HepG2 (cell line): ENCODE measurements at regions of chr20 and their contacts with region 1.

Region 1: GRCh38 chr20:62321521-62321948 is 18.7 kb downstream of the ADRM1 start:
- DNase-seq: no peak
- ATAC-seq: peak; percentile 18
- H3K4me3 ChIP-seq: no peak overlapping the region
- H3K27ac ChIP-seq: no peak overlapping the region
- H3K4me1 ChIP-seq: no peaks in the 10 kb centered on the region
- H3K27me3 ChIP-seq: no peaks in the 10 kb centered on the region
- CTCF ChIP-seq: 0 out of 2 replicates have a peak, but pooled peaks have one; percentile 13
- EP300 ChIP-seq: no peak
- POLR2A ChIP-seq: 0 out of 4 replicates have a peak, but pooled peaks of 1 of the 2 experiments have one; percentile 24
- RAD21 ChIP-seq: no peak

Region 2: DNA sequence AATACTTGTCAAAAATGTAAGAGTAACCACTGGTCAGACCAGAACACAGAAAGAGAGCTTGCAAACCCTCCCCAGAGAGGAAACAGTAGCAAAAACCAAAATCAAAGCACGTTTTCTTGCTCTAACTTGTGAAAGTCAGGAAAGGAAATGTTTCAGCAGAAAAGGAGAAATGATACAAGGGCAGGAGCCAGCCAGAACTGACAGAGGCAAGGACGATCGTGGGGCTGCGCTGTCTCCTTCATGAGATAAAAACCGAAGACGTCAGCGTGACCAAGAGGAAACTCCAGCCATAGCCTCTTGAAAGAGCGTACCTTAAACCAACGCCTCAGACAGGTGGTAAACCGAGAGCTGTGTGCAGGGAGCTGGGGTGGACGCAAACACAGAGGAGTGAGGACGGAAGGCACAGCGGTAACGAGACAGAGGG is 18.1 kb after region 1 on chr20:
- CTCF ChIA-PET with region 1: no interaction called
- POLR2A ChIA-PET with region 1: no interaction called
- in situ Hi-C with region 1: no loop called
- intact Hi-C with region 1: loop called (anchors 1 kb)
- DNase-seq: no peak
- ATAC-seq: no peak
- H3K4me3 ChIP-seq: no peak overlapping the region
- H3K27ac ChIP-seq: no peak overlapping the region
- H3K4me1 ChIP-seq: peaks cover 28% of the 10 kb centered on the region
- H3K27me3 ChIP-seq: no peaks in the 10 kb centered on the region
- CTCF ChIP-seq: no peak
- EP300 ChIP-seq: no peak
- POLR2A ChIP-seq: no peak
- RAD21 ChIP-seq: no peak